Dorsolateral prefrontal cortex (tissue), 120 donors: ENCODE measurements at regions of chr16 and their contacts with region 1.

Region 1: DNA sequence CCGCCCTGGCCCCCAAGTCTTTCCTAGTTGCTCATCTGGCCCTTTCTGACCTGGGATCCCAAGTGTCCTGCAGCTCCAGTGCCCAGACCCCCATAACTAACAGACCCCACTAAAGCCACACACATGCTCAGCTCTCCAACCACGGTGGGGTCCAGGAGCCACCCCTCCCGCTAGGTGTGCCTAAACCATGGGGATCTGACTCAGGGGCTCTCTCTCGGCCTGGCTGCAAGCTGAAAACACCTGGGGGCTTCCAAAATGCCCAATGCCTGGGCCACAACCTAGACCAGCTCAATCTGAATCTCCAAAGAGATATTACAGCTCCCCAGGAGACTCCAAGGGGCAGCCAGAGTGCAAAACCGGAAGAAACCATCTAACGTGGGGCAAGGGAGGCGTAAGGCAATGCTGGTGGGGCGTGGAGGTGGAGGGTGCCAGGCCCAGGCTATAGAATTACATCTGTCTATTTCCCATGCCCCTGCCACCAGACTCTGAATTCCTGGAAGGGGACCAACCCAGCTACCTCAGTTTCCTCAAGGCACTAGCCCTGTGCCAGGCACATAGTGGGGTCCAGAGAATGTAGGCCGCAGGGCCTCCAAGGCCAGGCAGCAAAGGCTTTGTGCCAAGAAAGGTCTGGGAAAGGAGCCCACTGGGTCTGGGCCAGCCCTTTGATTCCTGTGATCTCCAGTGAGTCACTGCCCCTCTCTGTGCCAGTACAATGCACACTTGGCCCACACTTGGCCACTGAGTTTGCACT is 3.3 kb downstream of the CD2BP2 start:
- DNase-seq: peak in 9 of 10 donors; percentile 63 to 91 (median 81)
- H3K4me3 ChIP-seq: peak overlapping the region in 9 of 59 donors; percentile 5 to 33 (median 17)
- H3K27ac ChIP-seq: peak overlapping the region in 56 of 59 donors; percentile 6 to 98 (median 79)
- H3K27me3 ChIP-seq: no peaks in the 10 kb centered on the region
- CTCF ChIP-seq: peak in 2 of 56 donors; percentile 10 to 11

Region 2: GRCh38 chr16:30335598-30336474 is 15.9 kb before region 1 on chr16:
- intact Hi-C with region 1: loop called in 1 of 2 experiments (anchors 2 kb)
- DNase-seq: peak in 1 of 10 donors; percentile 23
- H3K4me3 ChIP-seq: peak overlapping the region; percentile 39 to 80 (median 70)
- H3K27ac ChIP-seq: peak overlapping the region in 58 of 59 donors; percentile 7 to 93 (median 82)
- H3K27me3 ChIP-seq: no peaks in the 10 kb centered on the region
- CTCF ChIP-seq: peak in 1 of 56 donors; percentile 3

Region 3: GRCh38 chr16:31386157-31386984 is 1034.6 kb after region 1 on chr16:
- intact Hi-C with region 1: no loop called
- DNase-seq: peak in 2 of 10 donors; percentile 6 to 47
- H3K4me3 ChIP-seq: no peak overlapping the region
- H3K27ac ChIP-seq: peak overlapping the region in 2 of 59 donors; percentile 1 to 31
- H3K27me3 ChIP-seq: peaks cover 0 to 17% (median 0%) of the 10 kb centered on the region in 45 donors
- CTCF ChIP-seq: no peak